GM12878 (cell line): ENCODE measurements at regions of chr6 and their contacts with region 1.

Region 1: DNA sequence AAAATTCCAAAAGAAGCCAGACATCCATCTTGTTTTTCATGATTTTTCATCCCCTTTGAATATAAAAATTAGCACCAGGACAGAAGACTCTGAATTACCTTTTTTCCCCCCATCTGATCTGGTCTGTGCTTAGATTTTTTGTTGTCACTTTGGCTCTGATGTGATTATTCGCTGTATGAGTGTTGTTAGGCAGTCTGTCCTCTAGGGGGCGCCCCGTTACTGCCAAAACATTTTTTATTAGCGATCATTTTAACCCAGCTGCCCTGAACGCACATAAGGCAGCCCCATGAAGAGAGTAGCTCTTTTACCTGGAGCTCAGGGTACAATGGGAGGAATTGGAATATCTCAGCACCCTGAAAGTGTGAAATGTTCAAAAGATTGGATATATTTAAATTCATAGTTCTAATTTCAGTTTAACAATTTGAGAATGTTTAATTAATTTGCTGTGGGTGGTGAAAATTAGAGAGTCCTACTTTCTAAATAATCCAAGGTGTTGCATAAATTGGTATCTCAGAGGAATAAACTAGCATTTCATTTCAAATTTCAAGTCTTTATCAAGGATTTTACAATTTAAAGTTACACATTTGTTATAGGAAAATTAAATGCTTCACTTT is 60.8 kb downstream of the PRPH2 start:
- DNase-seq: peak; percentile 16
- ATAC-seq: peak; percentile 94
- H3K4me3 ChIP-seq: no peak overlapping the region
- H3K27ac ChIP-seq: no peak overlapping the region
- H3K4me1 ChIP-seq: no peaks in the 10 kb centered on the region
- H3K27me3 ChIP-seq: no peaks in the 10 kb centered on the region
- CTCF ChIP-seq: peak; percentile 74 to 91 (median 86)
- EP300 ChIP-seq: no peak
- POLR2A ChIP-seq: no peak
- RAD21 ChIP-seq: peak; percentile 93

Region 2: DNA sequence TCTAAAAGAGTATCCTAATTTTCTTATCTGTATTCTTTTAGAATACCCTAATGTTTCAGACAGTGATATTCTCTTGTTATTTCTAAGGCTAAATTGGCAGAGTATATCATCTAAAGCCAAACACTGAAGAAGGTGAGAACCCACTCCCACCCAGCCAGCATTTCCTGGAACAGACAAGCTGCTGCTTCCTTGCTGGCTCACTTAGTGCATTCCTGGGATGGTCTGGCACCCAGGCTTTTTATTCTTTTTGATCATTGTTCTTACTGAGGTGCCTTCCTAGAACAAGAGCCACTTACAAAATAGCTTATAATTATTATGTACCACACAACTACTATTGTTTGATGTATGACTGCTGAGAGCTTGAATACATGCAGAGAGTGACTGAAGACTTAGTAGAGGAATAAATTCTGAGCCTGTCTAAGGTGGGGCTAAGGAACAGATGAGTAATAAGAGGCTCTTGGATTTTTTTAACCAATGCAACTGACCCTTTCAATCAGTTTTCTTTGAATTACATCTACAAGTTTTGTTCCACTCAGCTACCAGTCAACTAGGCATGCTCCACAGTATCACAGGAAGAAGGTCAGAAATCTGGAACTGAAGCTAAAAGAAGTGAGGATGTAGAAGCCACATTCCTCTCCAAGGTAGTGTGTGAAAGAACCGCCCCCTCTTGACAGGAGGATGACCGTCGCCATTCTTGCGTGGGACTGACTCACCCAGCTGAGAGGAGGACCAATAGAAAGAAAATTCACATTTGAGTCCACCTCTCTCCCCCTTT is 30.7 kb after region 1 on chr6:
- CTCF ChIA-PET with region 1: interaction called, 14 read pairs
- POLR2A ChIA-PET with region 1: no interaction called
- RAD21 ChIA-PET with region 1: no interaction called
- SMC1A ChIA-PET with region 1: interaction called, 5 read pairs
- in situ Hi-C with region 1: no loop called
- intact Hi-C with region 1: no loop called
- DNase-seq: no peak
- ATAC-seq: no peak
- H3K4me3 ChIP-seq: no peak overlapping the region
- H3K27ac ChIP-seq: no peak overlapping the region
- H3K4me1 ChIP-seq: no peaks in the 10 kb centered on the region
- H3K27me3 ChIP-seq: no peaks in the 10 kb centered on the region
- CTCF ChIP-seq: no peak
- EP300 ChIP-seq: no peak
- POLR2A ChIP-seq: no peak
- RAD21 ChIP-seq: no peak

Region 3: DNA sequence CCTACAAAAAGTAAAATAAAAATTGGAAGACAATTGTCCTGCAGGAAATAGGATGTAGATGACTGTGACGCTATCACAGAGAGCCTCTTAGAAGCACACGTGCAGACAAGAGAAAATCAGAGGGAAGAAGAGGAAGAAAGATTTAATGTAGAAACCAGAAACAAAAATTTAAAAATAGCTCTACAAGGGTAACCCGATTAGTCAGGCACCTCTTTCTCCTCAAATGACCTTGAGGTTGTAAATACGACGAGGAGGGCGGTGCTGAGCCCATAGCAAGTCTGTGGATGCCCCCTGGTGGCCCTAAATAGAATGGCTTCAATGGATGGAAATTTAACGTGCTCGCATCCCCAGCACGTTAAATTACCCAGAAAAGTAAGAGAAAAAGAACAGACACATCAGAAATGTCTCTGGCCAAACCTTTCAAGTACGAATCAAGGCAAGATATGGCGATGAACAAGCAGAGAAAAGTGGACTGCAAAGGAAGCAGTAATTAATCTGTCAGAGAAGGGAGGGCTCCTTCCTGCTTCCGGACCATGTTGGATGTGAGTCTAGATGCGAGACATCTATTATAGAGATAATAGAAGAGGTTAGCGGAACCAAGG is 64.9 kb after region 1 on chr6:
- CTCF ChIA-PET with region 1: interaction called, 99 read pairs
- POLR2A ChIA-PET with region 1: no interaction called
- RAD21 ChIA-PET with region 1: interaction called, 46 read pairs
- SMC1A ChIA-PET with region 1: interaction called, 59 read pairs
- in situ Hi-C with region 1: no loop called
- intact Hi-C with region 1: loop called (anchors 1 kb)
- DNase-seq: peak; percentile 66
- ATAC-seq: peak; percentile 96
- H3K4me3 ChIP-seq: peak overlapping the region; percentile 58; the same call in 1 of the 2 replicates
- H3K27ac ChIP-seq: peak overlapping the region; percentile 60
- H3K4me1 ChIP-seq: peaks cover 10% of the 10 kb centered on the region; the same call in 1 of the 2 replicates
- H3K27me3 ChIP-seq: no peaks in the 10 kb centered on the region
- CTCF ChIP-seq: peak; percentile 76 to 97 (median 89)
- EP300 ChIP-seq: no peak
- POLR2A ChIP-seq: no peak
- RAD21 ChIP-seq: peak; percentile 92

Region 4: DNA sequence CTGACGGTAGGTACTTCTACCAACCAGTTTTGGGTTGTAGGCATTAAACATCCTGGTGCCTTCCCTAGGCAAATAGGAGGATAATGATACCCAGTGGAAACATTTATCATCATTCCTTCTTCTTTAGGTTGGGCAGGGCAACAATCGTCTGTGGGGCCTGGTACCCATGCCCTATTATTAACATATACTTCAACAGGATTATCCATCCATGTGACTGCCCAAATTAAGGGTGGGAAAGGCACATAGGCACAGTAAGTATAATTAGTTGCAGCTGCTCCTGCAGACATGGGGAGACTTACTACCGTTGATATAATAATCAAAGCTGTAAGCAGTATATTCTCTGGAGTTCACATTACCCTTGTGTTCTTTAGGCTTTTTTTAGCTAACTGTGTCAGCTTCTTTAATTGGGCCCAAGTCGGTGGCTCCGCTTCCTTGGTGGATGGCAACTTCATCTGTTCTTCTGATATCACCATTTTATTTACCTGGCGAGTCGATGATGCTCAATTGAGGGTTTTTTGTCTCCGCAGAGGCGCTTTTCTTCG is 234.6 kb after region 1 on chr6:
- CTCF ChIA-PET with region 1: interaction called, 13 read pairs
- POLR2A ChIA-PET with region 1: no interaction called
- RAD21 ChIA-PET with region 1: interaction called, 6 read pairs
- SMC1A ChIA-PET with region 1: interaction called, 11 read pairs
- in situ Hi-C with region 1: no loop called
- intact Hi-C with region 1: loop called (anchors 1 kb)
- DNase-seq: no peak
- ATAC-seq: no peak
- H3K4me3 ChIP-seq: no peak overlapping the region
- H3K27ac ChIP-seq: no peak overlapping the region
- H3K4me1 ChIP-seq: peaks cover 11% of the 10 kb centered on the region
- H3K27me3 ChIP-seq: no peaks in the 10 kb centered on the region
- CTCF ChIP-seq: no peak
- EP300 ChIP-seq: no peak
- POLR2A ChIP-seq: no peak
- RAD21 ChIP-seq: no peak

Region 5: GRCh38 chr6:43627008-43627825 is 965.6 kb after region 1 on chr6:
- CTCF ChIA-PET with region 1: no interaction called
- POLR2A ChIA-PET with region 1: no interaction called
- RAD21 ChIA-PET with region 1: no interaction called
- SMC1A ChIA-PET with region 1: no interaction called
- in situ Hi-C with region 1: no loop called
- intact Hi-C with region 1: no loop called
- DNase-seq: peak; percentile 23
- ATAC-seq: peak; percentile 5; the same call in 2 of the 3 replicates
- H3K4me3 ChIP-seq: peak overlapping the region; percentile 75
- H3K27ac ChIP-seq: peak overlapping the region; percentile 27
- H3K4me1 ChIP-seq: peaks cover 20% of the 10 kb centered on the region
- H3K27me3 ChIP-seq: no peaks in the 10 kb centered on the region
- CTCF ChIP-seq: no peak
- EP300 ChIP-seq: no peak
- POLR2A ChIP-seq: no peak
- RAD21 ChIP-seq: no peak